ENCODE measurements at regions of chr3 and their contacts with region 1.

Region 1: DNA sequence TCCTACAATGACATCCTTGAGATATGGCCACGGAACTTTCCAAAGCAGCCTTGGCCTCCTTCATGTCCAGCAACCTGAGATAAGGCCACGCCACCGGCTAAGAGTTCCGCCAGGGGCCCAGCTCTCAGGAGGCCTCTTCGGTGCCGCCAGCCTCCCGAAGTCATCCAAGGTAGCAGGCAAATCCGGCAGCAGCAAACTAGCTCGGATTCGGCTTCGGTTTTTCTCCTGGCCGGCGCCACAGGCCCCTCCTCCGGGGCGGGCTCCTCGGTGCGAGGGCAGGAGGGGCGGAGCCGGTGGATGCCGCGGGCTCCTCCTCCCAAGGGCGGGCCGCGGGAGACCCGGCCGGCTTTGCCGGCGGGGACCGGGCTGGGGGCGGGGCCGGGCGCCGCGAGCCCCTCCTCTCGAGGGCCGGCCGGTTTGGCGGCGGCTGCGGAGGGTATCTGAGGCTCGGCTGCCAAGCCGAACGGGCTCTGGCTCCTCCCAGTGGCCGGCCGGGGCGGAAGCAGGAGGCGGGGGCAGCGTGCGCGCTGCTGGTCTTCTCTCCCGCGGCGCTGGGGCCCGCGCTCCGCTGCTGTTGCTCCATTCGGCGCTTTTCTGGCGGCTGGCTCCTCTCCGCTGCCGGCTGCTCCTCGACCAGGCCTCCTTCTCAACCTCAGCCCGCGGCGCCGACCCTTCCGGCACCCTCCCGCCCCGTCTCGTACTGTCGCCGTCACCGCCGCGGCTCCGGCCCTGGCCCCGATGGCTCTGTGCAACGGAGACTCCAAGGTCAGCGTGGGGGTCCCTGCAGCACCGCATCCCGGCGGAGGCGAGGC is at the start of gene GMPS:
- DNase-seq: peak; percentile 98
- total RNA-seq, gene GMPS: 36.1 to 47.4 TPM

Region 2: GRCh38 chr3:155001273-155002010 is 868.9 kb before region 1 on chr3:
- intact Hi-C with region 1: no loop called
- DNase-seq: no peak

Region 3: GRCh38 chr3:155766206-155766605 is 104.1 kb before region 1 on chr3:
- intact Hi-C with region 1: no loop called
- DNase-seq: no peak

Region 4: DNA sequence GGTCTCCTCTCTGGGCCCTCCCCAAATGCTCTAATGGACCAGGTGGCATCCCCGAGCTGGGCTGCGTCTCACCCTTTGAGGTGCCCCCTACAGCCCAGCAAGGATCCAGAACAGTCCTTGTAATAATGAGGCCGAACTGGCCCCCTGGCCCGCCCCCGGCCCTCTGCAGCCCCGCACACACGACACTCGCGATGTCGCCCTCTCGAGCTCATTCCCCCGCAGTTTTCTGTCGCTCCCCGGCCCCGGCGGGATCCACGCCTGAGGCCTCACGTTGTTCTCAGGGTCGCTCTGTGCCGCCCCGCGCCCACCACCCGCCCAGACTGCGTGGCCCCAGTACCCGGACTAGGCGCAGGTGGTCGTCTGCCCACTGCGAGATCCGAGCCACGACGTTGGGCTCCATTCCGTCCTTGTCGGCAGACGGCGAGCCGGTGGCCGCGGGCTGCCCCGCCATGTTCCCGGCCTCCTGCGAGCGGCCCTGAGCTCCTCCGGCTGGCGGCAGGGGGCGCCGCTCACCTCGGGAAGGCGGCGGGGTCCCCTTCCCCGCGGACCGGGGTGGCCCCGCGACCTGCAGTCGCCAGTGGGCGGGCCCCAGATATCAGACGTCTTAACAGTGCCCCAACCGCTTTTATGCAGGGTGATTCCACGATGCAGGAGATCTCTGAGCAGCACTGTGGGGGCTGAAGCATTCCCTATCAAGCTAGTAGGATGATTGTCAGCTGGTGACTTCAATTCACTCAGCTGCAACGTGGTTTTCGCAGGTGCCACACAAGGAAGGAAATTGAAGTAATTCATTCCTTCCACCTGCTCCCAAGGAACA is 64.3 kb before region 1 on chr3 and contains the start of gene C3orf33:
- intact Hi-C with region 1: loop called in 1 of 2 experiments (anchors 5 kb)
- DNase-seq: peak; percentile 88
- total RNA-seq, gene C3orf33: 3.0 to 3.7 TPM

Region 5: GRCh38 chr3:155895379-155895900 is 25.1 kb after region 1 on chr3:
- intact Hi-C with region 1: loop called in 1 of 2 experiments (anchors 1 kb)
- DNase-seq: no peak